Mammary epithelial cell (primary cell): ENCODE measurements at regions of chr4 and their contacts with region 1.

Region 1: DNA sequence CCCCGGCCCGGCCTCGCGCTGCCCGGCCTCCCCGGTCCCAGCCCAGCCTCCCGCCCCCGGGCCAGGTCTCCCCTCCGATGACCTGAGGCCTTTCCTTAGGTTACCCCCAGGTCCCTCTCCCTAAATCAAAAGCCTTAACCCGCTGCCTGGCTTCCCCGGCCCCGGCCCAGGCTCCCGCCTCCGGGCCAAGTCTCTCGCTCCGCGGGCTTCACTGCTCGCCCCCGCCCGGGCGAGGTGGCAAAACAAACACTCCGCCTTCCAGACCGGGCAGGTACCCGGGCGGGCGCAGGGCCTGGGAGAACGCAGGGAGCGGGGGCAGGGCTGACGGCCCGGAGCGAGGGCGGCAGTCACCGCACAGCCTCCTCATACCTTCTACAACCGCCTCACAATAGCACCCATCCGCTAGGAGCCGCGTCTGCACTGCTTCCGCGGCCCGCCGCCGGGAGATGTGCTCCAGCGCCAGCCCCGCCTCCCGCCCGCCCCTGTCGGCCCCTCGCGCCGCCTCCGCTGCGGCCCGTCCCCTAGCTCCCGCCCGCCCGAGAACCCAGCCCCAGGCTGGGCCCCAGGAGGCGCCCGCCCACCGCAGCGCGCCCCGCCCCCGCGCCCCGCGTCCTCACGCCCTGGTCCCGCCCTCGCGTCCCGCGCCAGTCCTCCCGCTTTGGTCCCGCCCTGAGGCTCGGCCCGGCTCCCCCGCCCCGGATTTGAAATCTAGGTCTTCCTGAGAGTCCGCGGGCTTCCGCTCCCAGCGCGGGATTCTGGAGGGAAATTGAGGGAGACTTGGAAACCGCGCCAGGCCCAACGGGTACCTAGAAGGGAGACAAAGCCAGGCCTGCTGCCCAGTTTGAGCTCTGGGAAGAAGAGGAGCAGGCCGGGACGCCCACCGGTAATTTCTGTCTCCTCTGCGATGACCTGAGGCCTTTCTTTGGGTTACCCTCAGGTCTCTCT is at the starts of genes CASP3 and PRIMPOL:
- DNase-seq: peak; percentile 95
- H3K4me3 ChIP-seq: peak within 1 kb of the TSS; percentile 78 to 80 (median 79)
- H3K27ac ChIP-seq: peak within 1 kb of the TSS; percentile 97
- H3K4me1 ChIP-seq: peaks cover 19% of the 10 kb centered on the region
- H3K27me3 ChIP-seq: no peaks in the 10 kb centered on the region
- CTCF ChIP-seq: peak in 1 of 2 donors; percentile 55
- total RNA-seq, gene CASP3: 34.2 to 43.0 TPM
- total RNA-seq, gene PRIMPOL: 8.0 to 19.9 TPM

Region 2: GRCh38 chr4:184217634-184218033 is 431.7 kb before region 1 on chr4 and contains the start of gene ENPP6:
- CTCF ChIA-PET with region 1: no interaction called
- dilution Hi-C with region 1: no loop called
- in situ Hi-C with region 1: no loop called
- intact Hi-C with region 1: no loop called
- DNase-seq: no peak
- H3K4me3 ChIP-seq: no peak within 1 kb of the TSS
- H3K27ac ChIP-seq: no peak within 1 kb of the TSS
- H3K4me1 ChIP-seq: no peaks in the 10 kb centered on the region
- H3K27me3 ChIP-seq: no peaks in the 10 kb centered on the region
- CTCF ChIP-seq: no peak
- total RNA-seq, gene ENPP6: 0.33 TPM in 1 of 2 donors, not detected in the other

Region 3: GRCh38 chr4:184400375-184400870 is 248.9 kb before region 1 on chr4:
- CTCF ChIA-PET with region 1: no interaction called
- dilution Hi-C with region 1: no loop called
- in situ Hi-C with region 1: no loop called
- intact Hi-C with region 1: loop called (anchors 10 kb)
- DNase-seq: peak; percentile 92
- H3K4me3 ChIP-seq: no peak overlapping the region
- H3K27ac ChIP-seq: peak overlapping the region; percentile 89
- H3K4me1 ChIP-seq: peaks cover 29% of the 10 kb centered on the region
- H3K27me3 ChIP-seq: no peaks in the 10 kb centered on the region
- CTCF ChIP-seq: peak; percentile 28 to 41

Region 4: DNA sequence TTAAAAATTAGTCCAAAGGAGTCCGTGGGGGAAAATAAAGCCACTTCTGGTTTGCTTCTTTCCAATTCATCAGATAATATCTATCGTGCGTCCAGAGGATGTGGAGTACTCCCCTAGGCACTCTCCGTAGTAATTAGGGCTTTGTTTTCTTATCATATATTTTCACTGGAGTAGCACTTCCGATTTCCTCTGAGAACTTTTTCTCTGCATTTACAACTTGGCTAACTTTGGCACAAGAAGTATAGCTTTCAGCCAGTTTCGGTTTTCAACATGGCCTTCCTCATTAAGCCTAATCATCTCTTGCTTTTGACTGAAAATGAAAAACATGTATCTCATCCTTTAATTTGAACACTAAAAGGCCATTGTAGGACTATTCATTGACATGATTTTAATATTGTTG is 80.5 kb before region 1 on chr4:
- CTCF ChIA-PET with region 1: no interaction called
- dilution Hi-C with region 1: loop called (anchors 5 kb)
- in situ Hi-C with region 1: no loop called
- intact Hi-C with region 1: no loop called
- DNase-seq: no peak
- H3K4me3 ChIP-seq: no peak overlapping the region
- H3K27ac ChIP-seq: no peak overlapping the region
- H3K4me1 ChIP-seq: no peaks in the 10 kb centered on the region
- H3K27me3 ChIP-seq: no peaks in the 10 kb centered on the region
- CTCF ChIP-seq: no peak

Region 5: GRCh38 chr4:184695178-184695896 is 46.0 kb after region 1 on chr4:
- CTCF ChIA-PET with region 1: no interaction called
- dilution Hi-C with region 1: no loop called
- in situ Hi-C with region 1: no loop called
- intact Hi-C with region 1: loop called (anchors 1 kb)
- DNase-seq: peak; percentile 75
- H3K4me3 ChIP-seq: no peak overlapping the region
- H3K27ac ChIP-seq: peak overlapping the region; percentile 25
- H3K4me1 ChIP-seq: peaks cover 15% of the 10 kb centered on the region
- H3K27me3 ChIP-seq: no peaks in the 10 kb centered on the region
- CTCF ChIP-seq: no peak

Region 6: DNA sequence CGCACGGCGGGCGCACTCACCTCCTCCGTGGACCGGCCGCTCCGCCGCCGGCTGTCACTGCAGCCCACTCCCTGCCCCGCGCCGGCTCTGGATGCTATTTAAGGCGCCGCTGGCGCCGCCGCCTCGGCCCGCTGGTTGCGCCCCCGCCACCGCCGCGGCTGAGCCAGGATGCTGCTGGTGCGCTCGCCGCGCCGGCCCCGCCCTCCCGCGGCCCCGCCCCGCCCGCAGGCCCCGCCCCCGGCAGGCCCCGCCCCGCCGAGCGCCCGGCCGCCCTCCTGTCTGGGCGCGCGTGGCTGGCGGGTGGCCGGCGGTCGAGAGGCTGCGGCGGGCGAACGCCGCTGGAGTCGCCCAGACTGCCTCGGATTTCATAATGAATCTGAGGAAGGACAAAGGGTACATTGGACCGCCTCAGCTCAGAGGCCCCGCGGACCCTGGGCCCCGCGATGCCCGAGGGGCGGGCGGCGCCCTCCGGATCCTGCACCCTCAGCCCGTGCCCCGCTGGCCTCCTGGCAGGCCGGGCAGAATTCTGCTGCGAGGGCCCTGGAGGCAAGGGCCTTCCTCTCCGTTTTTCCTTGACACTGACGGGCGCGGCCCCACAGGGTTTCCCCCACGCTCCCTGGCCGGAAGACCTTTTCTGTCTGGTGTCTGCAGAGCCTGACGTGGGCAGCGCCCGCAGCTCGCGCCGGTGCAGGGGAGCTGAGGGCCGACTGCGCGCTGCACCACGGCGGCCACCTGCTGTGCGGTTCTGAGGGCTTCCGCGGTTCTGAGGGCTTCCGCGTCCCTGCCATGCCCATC is 176.8 kb after region 1 on chr4 and contains the start of gene ACSL1:
- CTCF ChIA-PET with region 1: no interaction called
- dilution Hi-C with region 1: no loop called
- in situ Hi-C with region 1: no loop called
- intact Hi-C with region 1: loop called (anchors 2 kb)
- DNase-seq: peak; percentile 56
- H3K4me3 ChIP-seq: peak within 1 kb of the TSS; percentile 53 to 75 (median 75)
- H3K27ac ChIP-seq: peak within 1 kb of the TSS; percentile 55
- H3K4me1 ChIP-seq: peaks cover 15% of the 10 kb centered on the region
- H3K27me3 ChIP-seq: no peaks in the 10 kb centered on the region
- CTCF ChIP-seq: peak in 1 of 2 donors; percentile 5
- total RNA-seq, gene ACSL1: 28.9 to 126 TPM

Region 7: GRCh38 chr4:184983672-184984356 is 334.5 kb after region 1 on chr4:
- CTCF ChIA-PET with region 1: no interaction called
- dilution Hi-C with region 1: no loop called
- in situ Hi-C with region 1: no loop called
- intact Hi-C with region 1: loop called (anchors 1 kb)
- DNase-seq: peak; percentile 59
- H3K4me3 ChIP-seq: no peak overlapping the region
- H3K27ac ChIP-seq: no peak overlapping the region
- H3K4me1 ChIP-seq: no peaks in the 10 kb centered on the region
- H3K27me3 ChIP-seq: peaks cover 2% of the 10 kb centered on the region
- CTCF ChIP-seq: peak; percentile 32 to 70